ENCODE measurements at regions of chr6 and their contacts with region 1.

Region 1: DNA sequence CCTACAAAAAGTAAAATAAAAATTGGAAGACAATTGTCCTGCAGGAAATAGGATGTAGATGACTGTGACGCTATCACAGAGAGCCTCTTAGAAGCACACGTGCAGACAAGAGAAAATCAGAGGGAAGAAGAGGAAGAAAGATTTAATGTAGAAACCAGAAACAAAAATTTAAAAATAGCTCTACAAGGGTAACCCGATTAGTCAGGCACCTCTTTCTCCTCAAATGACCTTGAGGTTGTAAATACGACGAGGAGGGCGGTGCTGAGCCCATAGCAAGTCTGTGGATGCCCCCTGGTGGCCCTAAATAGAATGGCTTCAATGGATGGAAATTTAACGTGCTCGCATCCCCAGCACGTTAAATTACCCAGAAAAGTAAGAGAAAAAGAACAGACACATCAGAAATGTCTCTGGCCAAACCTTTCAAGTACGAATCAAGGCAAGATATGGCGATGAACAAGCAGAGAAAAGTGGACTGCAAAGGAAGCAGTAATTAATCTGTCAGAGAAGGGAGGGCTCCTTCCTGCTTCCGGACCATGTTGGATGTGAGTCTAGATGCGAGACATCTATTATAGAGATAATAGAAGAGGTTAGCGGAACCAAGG is 4.2 kb upstream of the PRPH2 start:
- DNase-seq: peak; percentile 87
- ATAC-seq: peak; percentile 95
- H3K4me3 Mint-ChIP-seq: peak overlapping the region; percentile 78
- H3K27ac Mint-ChIP-seq: peak overlapping the region; percentile 95
- H3K4me1 Mint-ChIP-seq: peaks cover 21% of the 10 kb centered on the region
- H3K27me3 Mint-ChIP-seq: no peaks in the 10 kb centered on the region

Region 2: DNA sequence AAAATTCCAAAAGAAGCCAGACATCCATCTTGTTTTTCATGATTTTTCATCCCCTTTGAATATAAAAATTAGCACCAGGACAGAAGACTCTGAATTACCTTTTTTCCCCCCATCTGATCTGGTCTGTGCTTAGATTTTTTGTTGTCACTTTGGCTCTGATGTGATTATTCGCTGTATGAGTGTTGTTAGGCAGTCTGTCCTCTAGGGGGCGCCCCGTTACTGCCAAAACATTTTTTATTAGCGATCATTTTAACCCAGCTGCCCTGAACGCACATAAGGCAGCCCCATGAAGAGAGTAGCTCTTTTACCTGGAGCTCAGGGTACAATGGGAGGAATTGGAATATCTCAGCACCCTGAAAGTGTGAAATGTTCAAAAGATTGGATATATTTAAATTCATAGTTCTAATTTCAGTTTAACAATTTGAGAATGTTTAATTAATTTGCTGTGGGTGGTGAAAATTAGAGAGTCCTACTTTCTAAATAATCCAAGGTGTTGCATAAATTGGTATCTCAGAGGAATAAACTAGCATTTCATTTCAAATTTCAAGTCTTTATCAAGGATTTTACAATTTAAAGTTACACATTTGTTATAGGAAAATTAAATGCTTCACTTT is 64.9 kb before region 1 on chr6:
- CTCF ChIA-PET with region 1: interaction called, 90 read pairs
- DNase-seq: peak; percentile 89
- ATAC-seq: peak; percentile 89
- H3K4me3 Mint-ChIP-seq: no peak overlapping the region
- H3K27ac Mint-ChIP-seq: peak overlapping the region; percentile 5
- H3K4me1 Mint-ChIP-seq: peaks cover 4% of the 10 kb centered on the region
- H3K27me3 Mint-ChIP-seq: no peaks in the 10 kb centered on the region

Region 3: DNA sequence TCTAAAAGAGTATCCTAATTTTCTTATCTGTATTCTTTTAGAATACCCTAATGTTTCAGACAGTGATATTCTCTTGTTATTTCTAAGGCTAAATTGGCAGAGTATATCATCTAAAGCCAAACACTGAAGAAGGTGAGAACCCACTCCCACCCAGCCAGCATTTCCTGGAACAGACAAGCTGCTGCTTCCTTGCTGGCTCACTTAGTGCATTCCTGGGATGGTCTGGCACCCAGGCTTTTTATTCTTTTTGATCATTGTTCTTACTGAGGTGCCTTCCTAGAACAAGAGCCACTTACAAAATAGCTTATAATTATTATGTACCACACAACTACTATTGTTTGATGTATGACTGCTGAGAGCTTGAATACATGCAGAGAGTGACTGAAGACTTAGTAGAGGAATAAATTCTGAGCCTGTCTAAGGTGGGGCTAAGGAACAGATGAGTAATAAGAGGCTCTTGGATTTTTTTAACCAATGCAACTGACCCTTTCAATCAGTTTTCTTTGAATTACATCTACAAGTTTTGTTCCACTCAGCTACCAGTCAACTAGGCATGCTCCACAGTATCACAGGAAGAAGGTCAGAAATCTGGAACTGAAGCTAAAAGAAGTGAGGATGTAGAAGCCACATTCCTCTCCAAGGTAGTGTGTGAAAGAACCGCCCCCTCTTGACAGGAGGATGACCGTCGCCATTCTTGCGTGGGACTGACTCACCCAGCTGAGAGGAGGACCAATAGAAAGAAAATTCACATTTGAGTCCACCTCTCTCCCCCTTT is 34.3 kb before region 1 on chr6:
- CTCF ChIA-PET with region 1: interaction called, 53 read pairs
- DNase-seq: no peak
- ATAC-seq: peak; percentile 31
- H3K4me3 Mint-ChIP-seq: no peak overlapping the region
- H3K27ac Mint-ChIP-seq: peak overlapping the region; percentile 59
- H3K4me1 Mint-ChIP-seq: peaks cover 36% of the 10 kb centered on the region
- H3K27me3 Mint-ChIP-seq: no peaks in the 10 kb centered on the region

Region 4: DNA sequence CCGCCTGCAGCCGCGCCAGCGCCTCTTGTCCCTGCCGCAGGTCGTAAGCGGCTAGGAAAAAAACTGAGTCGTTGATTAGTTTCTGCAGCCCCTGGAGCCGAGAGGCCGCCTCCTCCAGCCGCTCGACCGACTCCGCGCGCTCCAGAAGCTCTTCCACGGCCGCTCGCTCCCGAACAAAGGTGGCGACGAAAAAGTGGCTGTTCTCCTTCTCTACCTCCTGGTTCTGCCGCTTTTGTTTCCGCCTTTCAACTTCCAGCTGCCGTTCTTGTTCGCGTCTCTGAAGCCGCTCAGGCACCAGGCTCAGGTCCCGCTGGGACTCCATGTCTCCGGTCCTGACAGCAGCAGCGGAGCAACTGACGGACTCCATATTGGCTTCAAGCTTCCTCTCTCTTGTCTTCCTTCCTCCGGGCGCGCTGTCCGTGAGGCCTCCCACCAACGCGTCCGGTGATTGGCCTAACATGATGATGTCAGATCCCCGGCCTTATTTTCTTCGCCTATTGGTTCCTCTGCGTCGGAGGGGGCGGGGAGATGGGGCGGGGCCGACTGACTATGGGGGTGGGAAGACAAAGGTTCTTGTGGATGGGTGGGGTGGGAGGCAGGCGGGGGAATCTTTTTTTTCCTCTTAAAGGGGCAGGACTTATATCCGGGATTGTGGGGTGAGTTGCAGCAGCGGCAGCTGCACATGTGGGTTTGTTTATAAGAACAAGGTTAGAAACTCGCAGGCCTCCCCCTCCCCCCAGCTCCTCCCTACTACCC is 19.3 kb after region 1 on chr6 and contains the start of gene TBCC:
- CTCF ChIA-PET with region 1: interaction called, 26 read pairs
- DNase-seq: peak; percentile 98
- ATAC-seq: peak; percentile 86
- H3K4me3 Mint-ChIP-seq: peak within 1 kb of the TSS; percentile 91
- H3K27ac Mint-ChIP-seq: peak within 1 kb of the TSS; percentile 100
- H3K4me1 Mint-ChIP-seq: peaks cover 31% of the 10 kb centered on the region
- H3K27me3 Mint-ChIP-seq: no peaks in the 10 kb centered on the region
- total RNA-seq, gene TBCC: 29.8 to 35.5 TPM

Region 5: GRCh38 chr6:42879372-42880239 is 153.0 kb after region 1 on chr6 and contains the start of gene RPL7L1:
- CTCF ChIA-PET with region 1: interaction called, 30 read pairs
- DNase-seq: peak; percentile 92
- ATAC-seq: peak; percentile 97
- H3K4me3 Mint-ChIP-seq: peak within 1 kb of the TSS; percentile 100
- H3K27ac Mint-ChIP-seq: peak within 1 kb of the TSS; percentile 100
- H3K4me1 Mint-ChIP-seq: peaks cover 22% of the 10 kb centered on the region
- H3K27me3 Mint-ChIP-seq: no peaks in the 10 kb centered on the region
- total RNA-seq, gene RPL7L1: 73.5 to 105 TPM

Region 6: DNA sequence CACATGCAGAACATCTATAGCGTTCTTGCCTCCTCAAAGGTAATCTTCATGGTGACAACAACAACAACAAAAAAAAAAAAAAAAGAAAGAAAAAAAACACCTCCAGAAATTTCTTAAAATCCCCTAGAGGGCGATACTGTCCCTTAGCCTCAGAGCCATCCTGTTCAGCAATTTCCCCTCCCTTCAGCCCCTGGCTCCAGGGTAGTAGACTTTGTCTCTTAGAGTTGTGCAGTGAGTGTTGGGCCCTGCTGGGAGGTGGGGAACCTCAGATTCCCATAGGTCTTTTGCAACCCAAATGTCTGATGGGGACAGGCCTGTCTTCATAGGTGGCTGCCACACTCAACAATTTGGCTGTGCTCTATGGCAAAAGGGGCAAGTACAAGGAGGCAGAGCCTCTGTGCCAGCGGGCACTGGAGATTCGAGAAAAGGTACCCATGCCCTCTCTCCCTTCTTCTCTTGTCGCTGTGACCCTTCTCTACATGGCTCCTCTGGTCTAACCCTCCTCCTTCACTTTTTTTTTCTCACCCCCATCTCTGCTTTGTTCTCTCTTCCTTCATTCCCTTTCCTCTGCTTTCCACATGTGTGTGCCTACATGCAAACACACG is 343.5 kb after region 1 on chr6:
- CTCF ChIA-PET with region 1: no interaction called
- DNase-seq: peak; percentile 50
- ATAC-seq: peak; percentile 81
- H3K4me3 Mint-ChIP-seq: no peak overlapping the region
- H3K27ac Mint-ChIP-seq: no peak overlapping the region
- H3K4me1 Mint-ChIP-seq: no peaks in the 10 kb centered on the region
- H3K27me3 Mint-ChIP-seq: no peaks in the 10 kb centered on the region

Measured in activated CD8-positive, alpha-beta memory T cell treated with anti-CD3 and anti-CD28 coated beads, Interleukin-2, amount 10 ng/mL, durations not matched to agents 7 days and 5 days (primary cell).